ENCODE measurements at regions of chr15 and their contacts with region 1.

Region 1: GRCh38 chr15:56918046-56918938 is at the start of gene TCF12:
- DNase-seq: peak; percentile 75

Region 2: DNA sequence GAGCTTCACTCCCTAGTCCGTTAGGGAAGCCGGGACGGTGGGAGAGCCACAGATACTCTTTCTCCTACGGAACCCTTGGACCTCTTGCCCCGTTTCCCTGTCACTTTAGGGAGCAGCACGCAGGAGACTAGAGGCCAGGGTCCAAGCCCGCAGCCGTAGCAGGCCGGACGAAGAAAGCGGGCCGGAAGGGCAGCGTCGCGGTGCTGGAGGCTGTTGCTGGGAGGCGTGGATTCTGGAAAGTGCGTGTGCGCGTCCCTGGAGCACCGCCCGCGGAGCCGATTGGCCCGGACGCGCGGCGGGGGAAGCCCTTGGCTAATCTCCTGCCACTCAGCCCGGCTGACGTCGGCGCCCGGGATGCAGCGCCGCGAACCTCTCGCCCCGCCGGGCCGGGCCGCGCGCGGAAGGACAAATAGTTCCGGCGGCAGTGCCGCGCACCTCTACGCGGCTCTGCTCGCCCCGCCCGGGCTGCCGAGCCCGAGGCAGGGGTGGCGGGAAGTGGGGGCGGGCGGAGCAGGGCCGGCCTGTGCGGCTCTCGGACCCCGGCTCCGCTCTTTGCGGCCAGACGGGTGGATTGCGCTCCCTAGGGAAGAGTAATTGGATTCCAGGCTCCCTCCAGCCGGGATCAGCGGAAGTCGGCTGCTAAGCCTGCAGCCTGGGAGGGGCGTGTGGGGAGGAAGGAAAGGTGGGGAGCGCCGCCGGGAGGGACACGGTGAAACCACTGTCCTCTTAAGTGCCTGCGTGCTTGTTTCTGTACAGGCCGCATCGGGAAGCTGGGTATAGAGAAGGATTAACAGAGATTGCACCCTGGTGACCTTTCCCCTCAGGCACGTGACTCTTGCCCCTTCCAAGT is 31.1 kb before region 1 on chr15:
- CTCF ChIA-PET with region 1: interaction called, 3 read pairs
- POLR2A ChIA-PET with region 1: interaction called, 24 read pairs
- DNase-seq: peak; percentile 76

Measured in HEK293T (cell line).